Transverse colon (tissue), 4 donors: ENCODE measurements at regions of chr9 and their contacts with region 1.

Region 1: GRCh38 chr9:70602321-70603019 is 188.0 kb upstream of the KLF9 start:
- DNase-seq: peak; percentile 61
- H3K4me3 ChIP-seq: peak overlapping the region in 2 of 4 donors; percentile 1 to 5
- H3K27ac ChIP-seq: peak overlapping the region; percentile 82 to 86 (median 84)
- H3K4me1 ChIP-seq: peaks cover 14 to 29% (median 21%) of the 10 kb centered on the region in 4 donors
- H3K27me3 ChIP-seq: no peaks in the 10 kb centered on the region
- CTCF ChIP-seq: peak; percentile 70 to 87 (median 75)
- EP300 ChIP-seq: no peak
- POLR2A ChIP-seq: no peak

Region 2: GRCh38 chr9:69971643-69972449 is 630.6 kb before region 1 on chr9:
- in situ Hi-C with region 1: loop called in 3 of 4 experiments (anchors 25 kb)
- intact Hi-C with region 1: no loop called
- DNase-seq: peak; percentile 67
- H3K4me3 ChIP-seq: no peak overlapping the region
- H3K27ac ChIP-seq: no peak overlapping the region
- H3K4me1 ChIP-seq: no peaks in the 10 kb centered on the region
- H3K27me3 ChIP-seq: no peaks in the 10 kb centered on the region
- CTCF ChIP-seq: peak; percentile 73 to 90 (median 82)
- EP300 ChIP-seq: no peak
- POLR2A ChIP-seq: no peak

Region 3: GRCh38 chr9:70136632-70137031 is 465.8 kb before region 1 on chr9:
- in situ Hi-C with region 1: loop called in 1 of 4 experiments (anchors 25 kb)
- intact Hi-C with region 1: loop called (anchors 10 kb)
- DNase-seq: no peak
- H3K4me3 ChIP-seq: no peak overlapping the region
- H3K27ac ChIP-seq: no peak overlapping the region
- H3K4me1 ChIP-seq: peaks cover 0 to 3% (median 0%) of the 10 kb centered on the region in 4 donors
- H3K27me3 ChIP-seq: no peaks in the 10 kb centered on the region
- CTCF ChIP-seq: no peak
- EP300 ChIP-seq: no peak
- POLR2A ChIP-seq: no peak

Region 4: GRCh38 chr9:70340572-70340971 is 261.9 kb before region 1 on chr9:
- in situ Hi-C with region 1: loop called in 3 of 4 experiments (anchors 5 to 10 kb)
- intact Hi-C with region 1: loop called (anchors 5 kb)
- DNase-seq: no peak
- H3K4me3 ChIP-seq: no peak overlapping the region
- H3K27ac ChIP-seq: no peak overlapping the region
- H3K4me1 ChIP-seq: peaks cover 0 to 3% (median 0%) of the 10 kb centered on the region in 4 donors
- H3K27me3 ChIP-seq: no peaks in the 10 kb centered on the region
- CTCF ChIP-seq: peak; percentile 53 to 77 (median 60)
- EP300 ChIP-seq: no peak
- POLR2A ChIP-seq: no peak

Region 5: GRCh38 chr9:70347046-70347445 is 255.4 kb before region 1 on chr9:
- in situ Hi-C with region 1: loop called (anchors 5 to 10 kb)
- intact Hi-C with region 1: loop called (anchors 5 kb)
- DNase-seq: no peak
- H3K4me3 ChIP-seq: no peak overlapping the region
- H3K27ac ChIP-seq: no peak overlapping the region
- H3K4me1 ChIP-seq: no peaks in the 10 kb centered on the region
- H3K27me3 ChIP-seq: no peaks in the 10 kb centered on the region
- CTCF ChIP-seq: no peak
- EP300 ChIP-seq: no peak
- POLR2A ChIP-seq: no peak

Region 6: GRCh38 chr9:70352802-70353201 is 249.7 kb before region 1 on chr9:
- in situ Hi-C with region 1: loop called (anchors 5 to 10 kb)
- intact Hi-C with region 1: loop called (anchors 5 kb)
- DNase-seq: no peak
- H3K4me3 ChIP-seq: no peak overlapping the region
- H3K27ac ChIP-seq: peak overlapping the region in 2 of 4 donors; percentile 23 to 28
- H3K4me1 ChIP-seq: peaks cover 0 to 9% (median 0%) of the 10 kb centered on the region in 4 donors
- H3K27me3 ChIP-seq: no peaks in the 10 kb centered on the region
- CTCF ChIP-seq: peak; percentile 59 to 77 (median 68)
- EP300 ChIP-seq: no peak
- POLR2A ChIP-seq: no peak

Region 7: GRCh38 chr9:70392189-70392588 is 210.3 kb before region 1 on chr9:
- in situ Hi-C with region 1: no loop called
- intact Hi-C with region 1: no loop called
- DNase-seq: no peak
- H3K4me3 ChIP-seq: peak overlapping the region in 1 of 4 donors; percentile 1
- H3K27ac ChIP-seq: peak overlapping the region; percentile 65 to 76 (median 66)
- H3K4me1 ChIP-seq: peaks cover 26 to 81% (median 46%) of the 10 kb centered on the region in 4 donors
- H3K27me3 ChIP-seq: no peaks in the 10 kb centered on the region
- CTCF ChIP-seq: peak in 2 of 5 experiments; percentile 3 to 21
- EP300 ChIP-seq: no peak
- POLR2A ChIP-seq: no peak

Region 8: GRCh38 chr9:70413798-70414775 is 188.4 kb before region 1 on chr9 and contains the start of gene KLF9:
- in situ Hi-C with region 1: loop called in 1 of 4 experiments (anchors 10 kb)
- intact Hi-C with region 1: loop called (anchors 1 kb)
- DNase-seq: peak; percentile 95
- H3K4me3 ChIP-seq: peak within 1 kb of the TSS; percentile 89 to 96 (median 92)
- H3K27ac ChIP-seq: peak within 1 kb of the TSS; percentile 99 to 100 (median 100)
- H3K4me1 ChIP-seq: peaks cover 21 to 59% (median 44%) of the 10 kb centered on the region in 4 donors
- H3K27me3 ChIP-seq: no peaks in the 10 kb centered on the region
- CTCF ChIP-seq: peak in 1 of 5 experiments; percentile 4
- EP300 ChIP-seq: peak; percentile 91
- POLR2A ChIP-seq: peak; percentile 99
- total RNA-seq, gene KLF9: 60.3 to 111 (median 82.9) TPM

Region 9: DNA sequence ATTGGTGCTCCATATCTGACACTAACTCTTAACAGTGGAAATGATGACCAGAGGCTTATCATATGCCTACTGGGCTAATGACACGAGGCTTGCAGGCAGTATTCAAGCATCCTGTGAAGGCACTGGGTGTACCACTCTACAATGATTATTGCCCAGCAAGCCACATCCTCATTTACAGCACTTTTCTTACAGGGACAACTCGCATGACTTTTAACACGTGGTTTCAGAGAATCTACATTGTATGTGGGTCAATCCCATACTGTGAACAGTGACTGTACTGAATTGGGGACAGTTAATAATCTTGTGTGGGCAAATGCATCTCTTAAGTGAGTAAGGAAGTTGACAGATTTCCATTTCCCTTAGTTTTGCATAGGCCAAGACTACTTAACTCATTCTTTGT is 258.9 kb after region 1 on chr9:
- in situ Hi-C with region 1: no loop called
- intact Hi-C with region 1: no loop called
- DNase-seq: no peak
- H3K4me3 ChIP-seq: no peak overlapping the region
- H3K27ac ChIP-seq: no peak overlapping the region
- H3K4me1 ChIP-seq: no peaks in the 10 kb centered on the region
- H3K27me3 ChIP-seq: no peaks in the 10 kb centered on the region
- CTCF ChIP-seq: no peak
- EP300 ChIP-seq: no peak
- POLR2A ChIP-seq: no peak

Region 10: DNA sequence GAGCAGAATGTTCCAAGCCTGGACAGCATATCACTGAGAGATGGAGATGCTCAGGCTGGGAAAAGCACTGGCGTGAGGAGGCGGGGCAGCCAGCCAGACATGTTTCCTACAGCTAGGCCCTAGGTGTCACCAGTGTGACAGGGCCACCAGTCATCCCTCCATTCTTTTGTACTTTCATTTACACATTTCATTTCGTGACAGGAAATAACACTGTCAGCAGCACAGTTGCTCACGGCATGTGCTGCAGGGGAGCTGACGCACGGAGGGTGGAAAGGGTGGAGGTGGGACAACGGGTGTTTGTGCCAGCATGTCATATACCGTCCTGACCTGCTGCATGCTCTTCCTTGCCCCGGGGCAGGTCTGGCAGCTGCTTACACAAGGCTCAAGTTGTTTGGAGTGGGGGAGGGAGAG is 1180.7 kb after region 1 on chr9:
- in situ Hi-C with region 1: no loop called
- intact Hi-C with region 1: no loop called
- DNase-seq: peak; percentile 69
- H3K4me3 ChIP-seq: no peak overlapping the region
- H3K27ac ChIP-seq: peak overlapping the region; percentile 24 to 48 (median 44)
- H3K4me1 ChIP-seq: no peaks in the 10 kb centered on the region
- H3K27me3 ChIP-seq: no peaks in the 10 kb centered on the region
- CTCF ChIP-seq: no peak
- EP300 ChIP-seq: peak; percentile 71
- POLR2A ChIP-seq: peak; percentile 48